Right ventricle myocardium inferior (tissue), 1 donor: ENCODE measurements at regions of chr1 and their contacts with region 1.

Region 1: DNA sequence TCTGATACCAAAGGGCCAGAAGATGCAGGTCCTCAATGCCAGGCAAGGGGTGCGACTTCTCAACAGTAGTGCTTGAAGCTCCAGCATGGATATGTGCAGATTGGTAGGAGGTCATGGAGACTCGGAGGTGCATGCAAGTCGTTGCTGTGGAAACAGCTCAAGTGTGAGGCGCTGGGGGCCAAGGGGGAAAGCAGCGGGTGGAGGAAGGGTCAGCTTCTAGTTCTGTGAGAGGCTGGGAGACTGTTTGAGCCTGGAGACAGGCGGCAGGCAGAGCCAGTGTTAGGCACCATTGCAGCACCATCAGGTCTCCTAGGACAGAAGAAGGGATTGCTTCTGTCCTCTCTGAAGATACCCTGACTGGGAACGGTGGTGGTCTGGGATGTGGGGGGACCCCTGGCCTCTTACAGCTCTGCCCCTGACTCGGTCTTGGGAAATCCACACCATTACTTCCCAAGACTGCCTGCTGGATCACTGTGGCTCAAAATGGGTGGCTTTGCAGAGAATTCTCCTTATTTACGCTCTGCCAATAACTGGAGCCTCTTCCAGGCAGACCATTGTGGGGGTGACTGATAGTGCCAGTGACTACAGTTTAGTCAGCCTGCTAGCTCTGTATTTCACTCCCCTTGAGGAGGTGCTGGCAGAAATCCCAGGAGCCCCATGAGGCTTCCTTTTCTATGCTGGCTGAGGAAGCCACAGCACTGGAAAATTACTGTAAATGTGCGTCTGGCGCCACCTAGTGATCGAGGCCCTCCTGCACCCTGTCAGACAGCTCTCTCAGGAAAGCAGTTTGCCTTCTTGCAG is 46.3 kb upstream of the VANGL1 start:
- DNase-seq: peak; percentile 90
- ATAC-seq: peak; percentile 87

Region 2: GRCh38 chr1:114979278-114979891 is 616.1 kb before region 1 on chr1:
- intact Hi-C with region 1: loop called (anchors 2 kb)
- DNase-seq: no peak
- ATAC-seq: no peak

Region 3: DNA sequence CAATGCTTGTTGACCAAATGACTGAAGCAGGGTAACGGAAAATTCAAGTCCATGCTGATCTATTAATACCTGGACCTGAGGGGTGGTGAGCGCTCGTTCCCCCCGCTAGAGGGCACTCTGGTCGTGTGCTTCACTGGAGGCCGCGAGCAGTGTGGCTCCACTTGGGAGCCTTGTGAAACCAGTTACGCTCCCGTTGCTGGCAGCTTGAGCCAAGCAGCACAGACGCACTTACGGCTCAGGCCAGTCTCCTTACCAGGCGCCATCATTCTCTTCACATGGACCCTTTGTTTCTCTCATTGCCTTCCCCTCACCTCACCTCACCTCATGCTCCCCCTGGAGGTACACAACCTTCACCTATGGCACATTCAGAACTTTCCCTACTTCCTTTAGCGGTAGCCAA is 456.5 kb before region 1 on chr1:
- intact Hi-C with region 1: loop called (anchors 1 kb)
- DNase-seq: peak; percentile 90
- ATAC-seq: peak; percentile 92

Region 4: GRCh38 chr1:115469703-115470476 is 125.6 kb before region 1 on chr1:
- intact Hi-C with region 1: loop called (anchors 10 kb)
- DNase-seq: no peak
- ATAC-seq: peak; percentile 63

Region 5: GRCh38 chr1:115506926-115507589 is 88.4 kb before region 1 on chr1:
- intact Hi-C with region 1: loop called (anchors 2 kb)
- DNase-seq: no peak
- ATAC-seq: peak; percentile 82

Region 6: GRCh38 chr1:115545791-115546733 is 49.4 kb before region 1 on chr1:
- intact Hi-C with region 1: loop called (anchors 2 kb)
- DNase-seq: no peak
- ATAC-seq: peak; percentile 77

Region 7: DNA sequence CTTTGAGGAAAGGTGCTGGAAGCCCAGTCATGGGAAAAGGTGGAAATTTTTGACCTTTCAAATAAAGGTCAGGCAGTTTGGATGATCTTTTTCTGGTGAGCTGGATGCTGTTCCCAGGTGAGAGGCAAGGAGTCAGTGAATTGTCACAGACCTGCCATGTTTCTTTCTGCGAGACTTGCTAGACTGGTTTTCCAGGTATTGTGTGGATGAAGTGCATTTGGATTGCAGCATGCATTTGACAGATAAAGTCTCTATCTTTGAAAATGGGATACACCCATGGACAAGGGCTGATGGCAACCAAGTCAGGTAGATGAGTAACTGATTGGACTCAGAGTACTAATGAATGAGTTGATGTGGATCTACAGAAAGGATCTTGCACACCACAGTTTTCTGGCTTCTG is 311.2 kb after region 1 on chr1:
- intact Hi-C with region 1: no loop called
- DNase-seq: no peak
- ATAC-seq: no peak